ENCODE measurements at regions of chr17 and their contacts with region 1.

Region 1: GRCh38 chr17:74619077-74619673 is 4.4 kb downstream of the CD300E start:
- DNase-seq: no peak
- H3K4me3 ChIP-seq: no peak overlapping the region
- H3K27ac ChIP-seq: no peak overlapping the region
- H3K4me1 ChIP-seq: no peaks in the 10 kb centered on the region
- H3K27me3 ChIP-seq: peaks cover 3% of the 10 kb centered on the region
- CTCF ChIP-seq: no peak

Region 2: DNA sequence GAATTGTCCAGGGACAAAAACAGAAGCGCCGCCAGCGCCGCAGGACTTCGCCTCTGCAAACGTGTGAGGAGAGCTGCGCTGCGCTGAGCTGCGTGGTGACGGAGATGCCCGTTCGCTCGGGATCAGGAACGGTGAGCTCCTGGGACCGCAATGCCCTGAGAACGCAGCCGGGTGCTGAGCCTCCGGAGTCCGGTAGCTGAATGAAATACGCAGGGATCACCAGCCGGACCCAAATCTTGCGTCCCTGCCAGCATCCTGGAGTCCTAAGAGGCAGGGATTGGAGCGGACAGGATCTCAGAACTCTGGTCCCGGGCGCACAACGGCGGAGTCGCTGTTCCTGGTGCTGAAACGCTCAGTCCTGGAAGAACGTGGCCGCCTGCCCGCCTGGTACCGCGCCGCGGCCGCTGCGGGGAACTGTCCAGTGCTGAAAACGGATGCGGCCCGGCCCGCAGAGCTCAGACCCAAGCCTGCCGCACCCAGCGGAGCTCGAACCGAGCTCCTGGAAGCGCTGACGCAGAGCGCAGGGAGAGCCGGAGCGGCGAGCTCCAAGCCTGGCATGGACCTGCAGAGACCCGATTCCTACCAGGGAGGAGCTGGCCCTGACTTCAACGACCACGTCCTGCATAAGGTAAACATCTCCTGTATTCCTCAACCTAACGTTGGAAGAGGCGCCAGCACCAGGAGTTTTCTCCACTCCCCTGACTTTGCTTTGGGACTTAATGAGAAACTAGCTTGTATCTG is 52.0 kb after region 1 on chr17:
- CTCF ChIA-PET with region 1: no interaction called
- dilution Hi-C with region 1: loop called (anchors 5 kb)
- in situ Hi-C with region 1: no loop called
- intact Hi-C with region 1: no loop called
- DNase-seq: peak; percentile 74
- H3K4me3 ChIP-seq: no peak overlapping the region
- H3K27ac ChIP-seq: no peak overlapping the region
- H3K4me1 ChIP-seq: no peaks in the 10 kb centered on the region
- H3K27me3 ChIP-seq: peaks cover 3% of the 10 kb centered on the region
- CTCF ChIP-seq: no peak

Region 3: GRCh38 chr17:74682028-74682427 is 62.9 kb after region 1 on chr17:
- CTCF ChIA-PET with region 1: no interaction called
- dilution Hi-C with region 1: no loop called
- in situ Hi-C with region 1: no loop called
- intact Hi-C with region 1: no loop called
- DNase-seq: no peak
- H3K4me3 ChIP-seq: no peak overlapping the region
- H3K27ac ChIP-seq: no peak overlapping the region
- H3K4me1 ChIP-seq: no peaks in the 10 kb centered on the region
- H3K27me3 ChIP-seq: no peaks in the 10 kb centered on the region
- CTCF ChIP-seq: no peak

Measured in mammary epithelial cell (primary cell).